Prostate gland (tissue), 2 donors: ENCODE measurements at regions of chr3 and their contacts with region 1.

Region 1: GRCh38 chr3:124928333-124929202 is 6.0 kb downstream of the MUC13 start:
- DNase-seq: peak; percentile 71
- H3K4me3 ChIP-seq: no peak overlapping the region
- H3K27ac ChIP-seq: no peak overlapping the region
- H3K4me1 ChIP-seq: no peaks in the 10 kb centered on the region
- H3K27me3 ChIP-seq: no peaks in the 10 kb centered on the region
- CTCF ChIP-seq: peak; percentile 38 to 76 (median 70)
- POLR2A ChIP-seq: no peak

Region 2: GRCh38 chr3:124202754-124203153 is 725.8 kb before region 1 on chr3:
- intact Hi-C with region 1: no loop called
- DNase-seq: no peak
- H3K4me3 ChIP-seq: no peak overlapping the region
- H3K27ac ChIP-seq: no peak overlapping the region
- H3K4me1 ChIP-seq: no peaks in the 10 kb centered on the region
- H3K27me3 ChIP-seq: no peaks in the 10 kb centered on the region
- CTCF ChIP-seq: no peak
- POLR2A ChIP-seq: no peak

Region 3: DNA sequence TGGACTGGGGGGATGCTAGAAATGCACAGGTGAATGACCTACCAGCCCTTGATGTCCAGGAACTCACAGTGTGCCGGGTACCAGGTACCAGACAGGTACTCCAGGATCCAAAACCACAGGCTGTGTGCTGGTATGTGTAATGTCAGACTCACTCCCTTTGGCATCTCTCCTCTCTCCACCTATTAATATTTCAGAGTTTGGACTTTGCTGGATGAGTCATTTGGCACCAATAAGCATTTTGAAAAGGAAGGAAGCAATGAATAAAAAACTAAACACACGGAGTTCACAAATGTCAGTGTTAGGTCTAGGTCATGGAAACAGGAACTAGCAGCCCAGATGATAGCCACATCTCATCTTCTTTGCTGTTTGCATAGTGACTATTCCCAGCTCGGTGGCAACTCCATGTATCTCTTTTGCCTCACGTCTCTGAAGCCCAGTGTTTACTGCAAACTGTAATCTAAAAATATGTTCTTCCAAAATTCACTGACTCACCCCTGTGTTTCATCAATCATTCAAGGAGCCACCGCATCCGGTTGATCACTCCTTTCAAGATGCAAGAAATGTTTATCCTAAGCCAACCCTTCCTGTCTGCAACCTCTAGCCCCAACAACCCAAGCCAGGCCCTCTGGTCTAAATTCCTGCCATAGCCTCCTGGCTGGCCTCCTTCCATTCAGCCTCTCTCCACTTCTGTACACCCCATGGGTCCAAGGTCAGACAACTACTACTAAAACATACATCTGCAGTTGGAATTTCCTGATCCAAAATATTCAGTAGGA is 49.8 kb before region 1 on chr3:
- intact Hi-C with region 1: no loop called
- DNase-seq: peak; percentile 62
- H3K4me3 ChIP-seq: no peak overlapping the region
- H3K27ac ChIP-seq: peak overlapping the region; percentile 44 to 51
- H3K4me1 ChIP-seq: peaks cover 6% of the 10 kb centered on the region
- H3K27me3 ChIP-seq: no peaks in the 10 kb centered on the region
- CTCF ChIP-seq: no peak
- POLR2A ChIP-seq: no peak

Region 4: GRCh38 chr3:124962403-124962940 is 33.9 kb after region 1 on chr3:
- intact Hi-C with region 1: no loop called
- DNase-seq: no peak
- H3K4me3 ChIP-seq: no peak overlapping the region
- H3K27ac ChIP-seq: no peak overlapping the region
- H3K4me1 ChIP-seq: no peaks in the 10 kb centered on the region
- H3K27me3 ChIP-seq: no peaks in the 10 kb centered on the region
- CTCF ChIP-seq: no peak
- POLR2A ChIP-seq: no peak

Region 5: DNA sequence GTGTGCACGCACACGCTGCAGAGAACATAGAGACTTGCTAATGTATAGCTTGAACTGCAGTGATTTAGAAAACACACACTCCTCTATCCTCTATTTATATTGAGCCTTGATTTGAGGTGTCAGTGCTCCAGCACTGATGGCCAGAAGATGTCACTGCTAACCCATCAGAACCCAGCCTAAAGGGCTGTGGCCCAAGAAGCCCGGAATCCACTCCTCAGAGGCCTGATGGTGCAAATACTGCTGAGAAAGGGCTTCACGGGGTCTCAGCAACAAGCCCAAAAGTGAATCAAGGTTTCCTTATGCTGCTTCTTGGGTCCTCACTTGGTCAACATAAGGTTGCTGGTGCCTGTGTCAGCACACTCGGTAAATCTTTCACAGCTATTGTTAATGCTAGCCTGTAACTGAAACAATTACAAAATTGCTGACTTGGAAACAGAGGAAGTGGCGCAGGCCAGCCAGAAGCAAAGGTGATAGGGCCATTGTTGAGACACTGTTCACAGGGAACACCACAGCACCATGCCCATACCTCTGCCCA is 67.0 kb after region 1 on chr3:
- intact Hi-C with region 1: loop called (anchors 5 kb)
- DNase-seq: peak; percentile 52
- H3K4me3 ChIP-seq: no peak overlapping the region
- H3K27ac ChIP-seq: no peak overlapping the region
- H3K4me1 ChIP-seq: no peaks in the 10 kb centered on the region
- H3K27me3 ChIP-seq: no peaks in the 10 kb centered on the region
- CTCF ChIP-seq: peak; percentile 24 to 82 (median 69)
- POLR2A ChIP-seq: no peak

Region 6: DNA sequence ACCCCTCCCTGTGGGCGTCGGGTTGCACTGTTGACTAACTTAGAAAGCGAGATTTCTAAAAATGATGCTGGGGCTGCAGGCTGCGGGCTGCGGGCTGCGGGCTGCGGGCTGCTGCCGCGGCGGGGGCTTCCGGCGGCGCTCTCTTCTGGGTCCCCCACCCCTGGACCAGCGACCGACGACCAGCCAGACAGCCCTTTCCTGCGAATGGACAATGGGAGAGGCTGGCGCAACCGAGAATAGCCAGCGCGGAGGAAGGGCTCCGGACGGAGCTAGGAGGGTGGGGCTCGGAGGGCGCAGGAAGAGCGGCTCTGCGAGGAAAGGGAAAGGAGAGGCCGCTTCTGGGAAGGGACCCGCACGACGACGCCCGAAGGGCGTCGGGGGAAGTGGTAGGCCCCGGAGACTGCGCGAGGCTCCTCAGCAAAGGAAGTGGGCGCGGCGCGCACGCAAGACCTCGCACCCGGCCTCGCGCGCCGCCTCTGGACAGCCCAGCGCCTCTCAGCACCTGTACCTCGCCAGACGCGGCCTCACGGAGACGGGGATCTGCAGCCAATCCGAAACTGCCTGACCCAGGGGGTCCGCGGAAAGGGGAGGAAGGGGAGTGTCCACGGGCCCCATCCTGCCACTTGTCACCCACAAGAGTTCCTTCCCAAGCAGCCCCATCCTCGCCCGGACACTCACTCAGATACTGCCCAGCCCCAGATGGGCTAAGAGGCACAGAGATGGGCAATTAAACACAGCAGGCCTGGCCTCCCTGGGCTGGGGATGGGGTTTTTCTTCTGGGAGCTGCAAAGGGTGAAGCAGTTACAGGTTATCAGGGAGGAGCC is 213.2 kb after region 1 on chr3:
- intact Hi-C with region 1: loop called (anchors 2 kb)
- DNase-seq: peak; percentile 14
- H3K4me3 ChIP-seq: peak overlapping the region; percentile 26 to 29
- H3K27ac ChIP-seq: peak overlapping the region in 1 of 2 donors; percentile 32
- H3K4me1 ChIP-seq: peaks cover 4% of the 10 kb centered on the region
- H3K27me3 ChIP-seq: no peaks in the 10 kb centered on the region
- CTCF ChIP-seq: peak in 2 of 4 experiments; percentile 45 to 53
- POLR2A ChIP-seq: no peak

Region 7: DNA sequence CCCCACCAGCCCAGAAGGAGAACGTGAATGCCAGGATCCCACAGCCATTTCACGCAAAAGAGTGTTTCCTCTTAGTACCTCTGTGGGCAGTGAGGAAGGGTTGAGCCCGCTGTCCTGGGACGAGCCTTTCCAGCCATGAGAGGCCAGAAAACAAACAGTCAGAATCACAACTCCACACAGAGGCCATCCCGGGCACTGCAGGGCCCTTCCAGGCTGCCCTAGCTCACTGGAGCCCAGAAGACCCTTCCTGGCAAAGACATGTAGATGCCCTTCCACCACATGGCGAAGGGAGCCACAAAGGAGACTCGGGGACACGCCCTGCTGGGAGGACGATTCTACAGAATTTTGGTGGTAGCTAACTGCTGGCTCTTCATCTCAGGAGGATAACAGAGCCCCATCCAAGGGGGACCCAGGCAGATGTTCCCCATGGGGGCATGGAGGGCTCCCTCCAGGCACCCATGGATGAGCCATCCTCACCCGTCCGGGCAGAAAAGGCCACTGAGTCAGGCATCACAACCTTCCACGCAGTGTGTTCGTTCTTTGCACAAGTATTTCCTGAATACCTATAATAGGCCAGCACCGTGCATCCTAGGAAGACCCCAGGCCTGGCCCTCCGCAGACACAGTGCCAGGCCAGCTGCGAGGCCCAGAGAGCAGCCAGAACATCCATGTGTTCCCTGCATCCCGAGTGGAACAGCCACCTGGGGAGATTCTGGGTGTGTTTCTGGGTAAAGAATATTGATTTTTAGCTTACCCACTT is 236.8 kb after region 1 on chr3:
- intact Hi-C with region 1: loop called (anchors 10 kb)
- DNase-seq: no peak
- H3K4me3 ChIP-seq: no peak overlapping the region
- H3K27ac ChIP-seq: no peak overlapping the region
- H3K4me1 ChIP-seq: no peaks in the 10 kb centered on the region
- H3K27me3 ChIP-seq: no peaks in the 10 kb centered on the region
- CTCF ChIP-seq: peak in 3 of 4 experiments; percentile 22 to 50 (median 34)
- POLR2A ChIP-seq: no peak

Region 8: GRCh38 chr3:125437631-125438435 is 509.3 kb after region 1 on chr3:
- intact Hi-C with region 1: loop called (anchors 2 kb)
- DNase-seq: peak; percentile 21
- H3K4me3 ChIP-seq: no peak overlapping the region
- H3K27ac ChIP-seq: no peak overlapping the region
- H3K4me1 ChIP-seq: no peaks in the 10 kb centered on the region
- H3K27me3 ChIP-seq: no peaks in the 10 kb centered on the region
- CTCF ChIP-seq: peak; percentile 85 to 96 (median 90)
- POLR2A ChIP-seq: no peak

Region 9: GRCh38 chr3:125585595-125586223 is 657.1 kb after region 1 on chr3:
- intact Hi-C with region 1: loop called (anchors 5 kb)
- DNase-seq: peak; percentile 50
- H3K4me3 ChIP-seq: no peak overlapping the region
- H3K27ac ChIP-seq: no peak overlapping the region
- H3K4me1 ChIP-seq: no peaks in the 10 kb centered on the region
- H3K27me3 ChIP-seq: no peaks in the 10 kb centered on the region
- CTCF ChIP-seq: peak; percentile 45 to 82 (median 75)
- POLR2A ChIP-seq: no peak

Region 10: GRCh38 chr3:125602752-125603649 is 674.4 kb after region 1 on chr3:
- intact Hi-C with region 1: no loop called
- DNase-seq: no peak
- H3K4me3 ChIP-seq: no peak overlapping the region
- H3K27ac ChIP-seq: no peak overlapping the region
- H3K4me1 ChIP-seq: no peaks in the 10 kb centered on the region
- H3K27me3 ChIP-seq: no peaks in the 10 kb centered on the region
- CTCF ChIP-seq: no peak
- POLR2A ChIP-seq: no peak